ENCODE measurements at regions of chr20 and their contacts with region 1.

Region 1: DNA sequence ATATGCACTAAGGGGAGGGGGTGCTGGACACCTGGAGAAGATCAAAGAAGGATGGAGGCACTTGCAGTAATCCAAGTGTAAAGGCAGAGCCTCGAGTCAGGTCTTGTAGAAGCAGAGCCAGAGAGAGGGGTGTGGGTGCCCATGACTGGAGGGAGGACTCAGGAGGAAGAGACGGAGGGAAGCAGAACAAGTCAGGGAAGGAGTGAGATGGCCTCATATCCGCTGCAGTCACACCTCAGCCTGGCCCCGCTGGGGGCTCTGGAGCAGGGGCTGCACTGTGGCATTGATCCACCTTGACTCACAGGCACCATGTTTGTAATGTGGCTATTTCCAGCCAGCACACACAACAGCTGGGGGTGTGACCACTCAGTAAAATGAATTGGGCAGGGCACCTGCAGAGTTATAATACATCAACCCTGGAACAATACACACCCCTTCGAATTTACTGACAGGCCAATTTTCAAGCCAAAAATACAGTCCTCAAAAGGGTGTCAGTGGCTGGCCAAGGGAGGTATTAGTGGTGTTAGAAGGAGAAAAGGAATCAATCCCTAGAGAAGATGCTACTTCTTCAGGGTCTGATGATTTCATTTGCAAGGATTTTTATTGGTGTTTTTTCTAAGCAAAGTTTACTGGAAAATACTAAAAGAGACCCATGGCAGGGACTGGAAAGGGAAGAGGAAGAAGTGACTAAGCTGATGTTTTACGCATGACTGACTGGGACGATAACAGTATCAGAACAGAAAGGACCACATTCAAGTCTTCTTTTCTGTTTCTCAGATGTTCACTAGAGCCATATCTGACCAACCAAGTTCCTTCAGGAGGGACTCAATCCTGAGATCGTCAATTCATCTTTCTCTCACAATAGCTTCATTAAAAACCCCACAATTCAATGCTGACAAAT is 18.9 kb upstream of the NXT1 start:
- DNase-seq: no peak
- ATAC-seq: no peak

Region 2: GRCh38 chr20:22333885-22334545 is 997.7 kb before region 1 on chr20:
- intact Hi-C with region 1: loop called (anchors 10 kb)
- DNase-seq: no peak
- ATAC-seq: peak; percentile 65

Region 3: DNA sequence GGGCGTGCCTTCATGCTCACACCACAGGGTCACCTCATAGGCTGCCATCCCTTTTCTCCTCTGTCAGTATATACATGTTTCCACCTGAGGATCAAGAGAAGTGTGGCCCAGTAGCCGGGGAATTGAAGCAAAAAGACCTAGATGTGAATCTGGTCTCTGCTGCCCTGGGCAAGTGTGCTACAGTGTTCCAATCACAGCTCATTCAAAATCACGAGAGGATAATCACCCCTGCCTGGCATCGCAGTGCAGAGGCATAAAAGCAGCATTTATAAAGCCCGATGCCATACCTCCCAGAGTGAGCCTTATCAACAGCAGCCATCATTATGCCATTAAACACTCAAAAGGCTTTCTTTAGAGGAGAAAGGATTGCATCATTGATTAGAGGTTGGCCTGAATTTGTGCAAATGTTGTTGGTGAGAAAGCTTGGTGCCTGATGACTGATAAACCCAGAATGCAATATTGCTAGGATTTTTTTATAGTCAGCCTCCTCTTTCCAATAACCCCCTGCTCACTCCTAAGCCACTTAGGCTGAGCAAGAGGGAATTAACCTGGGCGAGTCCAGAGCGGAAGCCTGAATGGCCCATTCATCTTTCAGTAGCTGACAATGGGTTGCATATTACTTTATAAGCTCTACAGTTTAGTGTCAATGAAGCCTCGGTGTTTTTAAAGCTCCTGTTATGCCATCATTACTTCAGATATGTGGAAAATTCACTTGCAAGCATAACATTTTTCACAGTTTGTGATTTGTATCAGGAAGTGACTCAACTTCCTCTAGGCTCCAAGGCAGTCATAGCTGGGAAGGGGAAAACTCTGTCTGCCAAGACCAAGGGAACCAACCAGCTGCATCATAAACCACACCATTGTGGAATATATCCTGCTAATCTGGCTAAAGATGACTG is 73.6 kb before region 1 on chr20:
- intact Hi-C with region 1: loop called (anchors 10 kb)
- DNase-seq: no peak
- ATAC-seq: peak; percentile 86

Measured in Right ventricle myocardium superior (tissue), 1 donor.